Activated CD4-positive, alpha-beta memory T cell treated with anti-CD3 and anti-CD28 coated beads, Interleukin-2, amount 10 ng/mL, durations not matched to agents 7 days and 5 days (primary cell): ENCODE measurements at regions of chr11 and their contacts with region 1.

Region 1: GRCh38 chr11:35138943-35139721 is at the start of gene CD44:
- DNase-seq: peak; percentile 75
- H3K4me3 Mint-ChIP-seq: peak within 1 kb of the TSS; percentile 97
- H3K27ac Mint-ChIP-seq: peak within 1 kb of the TSS; percentile 90
- H3K4me1 Mint-ChIP-seq: peaks cover 45% of the 10 kb centered on the region
- H3K27me3 Mint-ChIP-seq: peaks cover 10% of the 10 kb centered on the region
- total RNA-seq, gene CD44: 634 to 645 TPM

Region 2: GRCh38 chr11:34916015-34916842 is 222.9 kb before region 1 on chr11 and contains the starts of genes APIP and PDHX:
- CTCF ChIA-PET with region 1: no interaction called
- POLR2A ChIA-PET with region 1: interaction called, 13 read pairs
- DNase-seq: peak; percentile 96
- H3K4me3 Mint-ChIP-seq: peak within 1 kb of the TSS; percentile 81
- H3K27ac Mint-ChIP-seq: peak within 1 kb of the TSS; percentile 76
- H3K4me1 Mint-ChIP-seq: peaks cover 33% of the 10 kb centered on the region
- H3K27me3 Mint-ChIP-seq: no peaks in the 10 kb centered on the region
- total RNA-seq, gene APIP: 21.9 to 25.5 TPM
- total RNA-seq, gene PDHX: 28.0 to 29.7 TPM

Region 3: DNA sequence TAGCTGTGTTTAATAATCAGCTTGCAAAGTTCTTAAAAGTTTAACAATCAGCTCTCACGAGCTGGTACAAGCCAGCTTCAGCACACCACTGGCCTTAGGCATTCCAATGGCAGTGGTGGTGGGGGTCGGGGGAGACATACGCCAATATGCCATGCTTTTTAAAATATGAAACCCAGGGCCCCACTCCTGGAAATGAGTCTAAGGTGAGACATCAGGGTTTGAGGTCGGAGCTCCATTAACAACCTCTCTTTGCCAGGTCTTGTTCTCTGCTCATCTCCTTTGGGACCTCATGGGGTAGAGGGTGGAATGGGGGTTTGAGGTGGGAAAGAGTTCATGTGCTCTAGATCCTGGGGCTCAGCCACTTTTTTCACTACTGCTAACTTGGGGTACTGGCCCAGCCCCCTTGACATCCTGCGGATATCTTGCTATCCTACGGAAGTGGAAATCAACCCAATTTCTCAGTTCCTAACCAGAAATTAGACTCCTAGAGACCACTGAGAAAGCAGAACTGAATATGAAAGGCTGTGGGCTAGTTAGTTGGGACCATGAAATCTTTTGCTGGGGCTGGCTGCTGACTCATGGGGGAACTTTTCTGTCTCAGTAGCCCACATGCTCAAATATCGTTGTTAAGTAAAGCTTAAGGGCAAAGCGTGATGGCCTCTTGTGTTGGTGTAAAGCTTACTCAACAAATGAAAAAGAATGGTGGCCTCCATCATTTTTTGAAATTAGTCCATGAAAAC is 132.6 kb before region 1 on chr11:
- CTCF ChIA-PET with region 1: interaction called, 3 read pairs
- POLR2A ChIA-PET with region 1: interaction called, 20 read pairs
- DNase-seq: peak; percentile 45
- H3K4me3 Mint-ChIP-seq: no peak overlapping the region
- H3K27ac Mint-ChIP-seq: peak overlapping the region; percentile 67
- H3K4me1 Mint-ChIP-seq: peaks cover 49% of the 10 kb centered on the region
- H3K27me3 Mint-ChIP-seq: peaks cover 11% of the 10 kb centered on the region

Region 4: DNA sequence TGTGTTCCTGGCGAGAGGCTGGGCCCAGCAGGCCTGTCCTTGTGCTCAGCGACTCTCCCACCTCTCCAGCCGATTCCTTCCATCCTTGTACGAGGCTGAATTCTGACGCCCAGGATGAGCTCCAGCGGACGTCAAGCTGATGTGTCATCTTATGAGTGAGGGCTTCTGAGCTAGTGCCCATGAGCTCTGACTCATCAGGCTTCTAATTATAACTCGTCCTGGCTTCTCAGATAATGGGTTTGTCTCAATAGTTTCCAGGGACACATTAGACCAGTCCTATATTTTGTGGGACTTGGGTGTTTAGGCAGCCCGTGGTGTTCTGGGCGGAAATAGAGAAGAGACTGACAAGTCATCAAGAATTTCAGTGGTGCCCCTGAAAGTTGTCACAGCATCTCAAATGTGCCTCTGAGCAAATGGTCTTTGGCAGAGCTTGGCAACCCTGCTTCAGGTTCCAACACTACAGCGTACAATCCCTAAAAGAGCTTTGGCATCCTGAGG is 108.4 kb before region 1 on chr11:
- CTCF ChIA-PET with region 1: interaction called, 3 read pairs
- POLR2A ChIA-PET with region 1: interaction called, 35 read pairs
- DNase-seq: peak; percentile 62
- H3K4me3 Mint-ChIP-seq: peak overlapping the region; percentile 69
- H3K27ac Mint-ChIP-seq: peak overlapping the region; percentile 95
- H3K4me1 Mint-ChIP-seq: peaks cover 68% of the 10 kb centered on the region
- H3K27me3 Mint-ChIP-seq: peaks cover 5% of the 10 kb centered on the region

Region 5: GRCh38 chr11:35047179-35047578 is 92.0 kb before region 1 on chr11:
- CTCF ChIA-PET with region 1: interaction called, 5 read pairs
- POLR2A ChIA-PET with region 1: interaction called, 25 read pairs
- DNase-seq: peak; percentile 63
- H3K4me3 Mint-ChIP-seq: no peak overlapping the region
- H3K27ac Mint-ChIP-seq: peak overlapping the region; percentile 74
- H3K4me1 Mint-ChIP-seq: peaks cover 74% of the 10 kb centered on the region
- H3K27me3 Mint-ChIP-seq: peaks cover 4% of the 10 kb centered on the region

Region 6: GRCh38 chr11:35122308-35122707 is 16.8 kb before region 1 on chr11:
- CTCF ChIA-PET with region 1: interaction called, 3 read pairs
- POLR2A ChIA-PET with region 1: interaction called, 22 read pairs
- DNase-seq: no peak
- H3K4me3 Mint-ChIP-seq: no peak overlapping the region
- H3K27ac Mint-ChIP-seq: peak overlapping the region; percentile 44
- H3K4me1 Mint-ChIP-seq: peaks cover 59% of the 10 kb centered on the region
- H3K27me3 Mint-ChIP-seq: peaks cover 20% of the 10 kb centered on the region

Region 7: GRCh38 chr11:35165423-35166368 is 26.6 kb after region 1 on chr11:
- CTCF ChIA-PET with region 1: interaction called, 49 read pairs
- POLR2A ChIA-PET with region 1: interaction called, 634 read pairs
- DNase-seq: peak; percentile 95
- H3K4me3 Mint-ChIP-seq: peak overlapping the region; percentile 55
- H3K27ac Mint-ChIP-seq: peak overlapping the region; percentile 94
- H3K4me1 Mint-ChIP-seq: peaks cover 97% of the 10 kb centered on the region
- H3K27me3 Mint-ChIP-seq: no peaks in the 10 kb centered on the region

Region 8: GRCh38 chr11:35380586-35380985 is 241.5 kb after region 1 on chr11:
- CTCF ChIA-PET with region 1: no interaction called
- POLR2A ChIA-PET with region 1: no interaction called
- DNase-seq: no peak
- H3K4me3 Mint-ChIP-seq: no peak overlapping the region
- H3K27ac Mint-ChIP-seq: no peak overlapping the region
- H3K4me1 Mint-ChIP-seq: no peaks in the 10 kb centered on the region
- H3K27me3 Mint-ChIP-seq: peaks cover 6% of the 10 kb centered on the region